Activated naive CD4-positive, alpha-beta T cell treated with anti-CD3 and anti-CD28 coated beads for 36 hours (primary cell): ENCODE measurements at regions of chr2 and their contacts with region 1.

Region 1: GRCh38 chr2:161077367-161078210 is 82.6 kb upstream of the TANK start:
- DNase-seq: peak; percentile 91
- H3K4me3 Mint-ChIP-seq: peak overlapping the region; percentile 34
- H3K27ac Mint-ChIP-seq: peak overlapping the region; percentile 92
- H3K4me1 Mint-ChIP-seq: peaks cover 41% of the 10 kb centered on the region
- H3K27me3 Mint-ChIP-seq: no peaks in the 10 kb centered on the region

Region 2: DNA sequence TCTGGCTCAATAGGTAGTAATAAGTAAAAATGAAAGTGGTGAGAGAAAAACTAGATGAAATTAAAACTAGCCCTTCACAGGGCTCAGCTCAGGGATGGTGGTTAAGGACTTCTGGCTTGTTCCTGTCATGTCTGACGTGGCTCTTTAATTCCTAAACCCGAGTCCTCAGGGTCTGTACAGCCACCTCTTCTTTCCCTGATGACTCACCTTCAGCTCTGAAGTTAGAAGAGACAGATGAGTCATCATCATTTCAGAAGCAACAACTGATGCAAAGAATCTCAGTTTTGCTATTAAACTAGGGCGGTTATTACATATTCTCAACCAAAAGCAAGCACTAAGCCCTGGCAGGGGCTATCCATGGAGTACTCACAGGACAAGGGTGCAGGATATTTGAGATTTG is 853.5 kb before region 1 on chr2:
- CTCF ChIA-PET with region 1: no interaction called
- intact Hi-C with region 1: loop called (anchors 1 kb)
- DNase-seq: peak; percentile 58
- H3K4me3 Mint-ChIP-seq: no peak overlapping the region
- H3K27ac Mint-ChIP-seq: peak overlapping the region; percentile 50
- H3K4me1 Mint-ChIP-seq: peaks cover 52% of the 10 kb centered on the region
- H3K27me3 Mint-ChIP-seq: peaks cover 17% of the 10 kb centered on the region

Region 3: DNA sequence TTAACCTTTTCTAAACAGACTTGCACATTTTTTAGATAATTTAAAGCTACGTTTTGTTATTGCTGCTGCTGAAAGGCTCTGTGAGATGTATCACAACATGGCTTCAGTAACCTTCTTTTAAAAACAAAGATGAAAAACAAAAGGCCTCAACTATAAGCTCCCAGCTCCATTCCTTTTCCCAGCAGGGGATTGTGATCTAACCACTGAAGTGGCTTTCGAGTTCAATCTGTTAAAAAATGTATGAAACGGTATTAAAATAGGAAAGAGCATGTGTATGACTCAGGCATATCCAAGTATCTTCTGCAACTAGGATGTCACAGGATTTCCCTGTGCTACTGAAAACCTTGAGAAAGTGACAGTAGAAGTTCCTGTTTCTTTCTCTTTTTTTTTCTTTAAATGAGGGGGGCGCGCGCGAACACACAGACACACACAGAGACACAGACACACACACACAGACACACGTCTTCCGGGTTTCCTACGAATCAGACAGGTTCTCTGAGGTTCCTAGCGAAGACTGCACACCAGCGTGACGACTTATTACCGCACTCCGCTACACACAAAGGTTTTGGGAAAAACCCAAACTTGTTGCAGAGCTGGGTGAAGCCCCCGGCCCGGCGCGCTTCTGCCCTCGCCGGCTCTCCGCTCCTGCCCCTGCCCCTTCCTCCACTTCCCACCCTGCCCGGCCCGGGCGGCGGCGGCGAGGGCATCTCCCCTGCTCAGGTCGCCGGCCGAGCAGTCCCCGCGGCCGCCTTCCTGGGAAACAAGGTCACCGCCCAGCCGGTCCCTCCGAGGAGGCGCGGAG is 670.8 kb before region 1 on chr2:
- CTCF ChIA-PET with region 1: no interaction called
- intact Hi-C with region 1: loop called (anchors 2 kb)
- DNase-seq: peak; percentile 85
- H3K4me3 Mint-ChIP-seq: peak overlapping the region; percentile 81
- H3K27ac Mint-ChIP-seq: peak overlapping the region; percentile 94
- H3K4me1 Mint-ChIP-seq: peaks cover 75% of the 10 kb centered on the region
- H3K27me3 Mint-ChIP-seq: no peaks in the 10 kb centered on the region

Region 4: DNA sequence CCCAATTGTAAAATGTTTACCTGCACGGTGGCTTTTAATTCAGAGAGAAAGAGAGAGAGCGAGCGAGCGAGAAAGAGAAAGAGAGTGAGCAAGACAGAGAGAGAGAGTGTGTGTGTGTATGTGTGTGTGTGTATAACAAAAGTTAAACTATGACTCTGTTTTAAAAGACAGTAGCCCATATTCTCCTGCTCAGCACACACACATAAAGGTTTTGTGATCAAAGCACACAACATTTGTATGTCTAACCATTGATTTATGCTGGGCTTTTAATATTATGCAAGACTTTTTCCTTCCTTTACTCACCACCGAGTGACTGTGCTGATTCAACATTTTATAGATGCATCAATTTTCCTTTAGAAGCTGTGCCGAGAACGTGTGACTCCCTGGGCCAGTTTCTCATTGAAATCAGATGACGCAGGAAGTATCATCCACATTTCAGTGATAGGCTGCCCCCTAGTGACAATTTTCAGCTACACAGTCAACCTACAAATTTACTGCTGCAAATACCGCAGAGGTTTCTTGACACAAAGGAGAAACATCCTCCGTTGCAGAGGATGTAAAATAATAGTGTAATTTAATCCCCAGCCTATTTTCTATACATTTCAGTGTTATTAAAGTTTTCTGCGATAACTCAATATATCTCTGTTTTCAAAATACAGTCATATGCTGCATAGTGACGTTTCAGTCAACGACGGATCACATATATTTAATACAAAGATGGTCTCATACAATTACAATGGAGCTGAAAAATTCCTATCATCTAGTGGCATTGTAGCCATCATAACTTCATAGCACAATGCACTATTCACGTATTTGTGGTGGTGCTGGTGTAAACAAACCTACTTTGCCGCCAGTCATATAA is 83.2 kb before region 1 on chr2:
- CTCF ChIA-PET with region 1: no interaction called
- intact Hi-C with region 1: no loop called
- DNase-seq: peak; percentile 89
- H3K4me3 Mint-ChIP-seq: no peak overlapping the region
- H3K27ac Mint-ChIP-seq: no peak overlapping the region
- H3K4me1 Mint-ChIP-seq: peaks cover 7% of the 10 kb centered on the region
- H3K27me3 Mint-ChIP-seq: no peaks in the 10 kb centered on the region

Region 5: DNA sequence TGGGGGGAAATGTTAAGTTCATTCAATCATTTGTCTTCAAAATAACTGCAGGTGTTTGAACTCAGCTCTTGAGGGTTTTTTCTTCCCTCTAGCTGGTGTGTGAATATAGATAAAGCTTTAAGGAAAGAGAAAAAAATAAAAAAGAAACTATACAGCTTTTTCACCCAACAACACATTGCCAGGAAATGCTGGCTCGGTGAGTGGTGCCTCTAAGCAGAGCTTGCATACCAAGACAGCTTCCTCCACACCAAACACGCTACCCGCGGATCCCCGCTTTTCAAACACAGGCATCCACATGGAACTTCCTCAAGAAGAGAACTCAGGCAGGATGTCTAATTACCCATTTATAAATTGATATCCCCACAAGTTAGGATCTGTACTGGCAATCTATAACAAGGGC is 12.8 kb after region 1 on chr2:
- CTCF ChIA-PET with region 1: interaction called, 3 read pairs
- intact Hi-C with region 1: loop called (anchors 1 kb)
- DNase-seq: peak; percentile 74
- H3K4me3 Mint-ChIP-seq: no peak overlapping the region
- H3K27ac Mint-ChIP-seq: peak overlapping the region; percentile 68
- H3K4me1 Mint-ChIP-seq: peaks cover 33% of the 10 kb centered on the region
- H3K27me3 Mint-ChIP-seq: no peaks in the 10 kb centered on the region

Region 6: GRCh38 chr2:161160226-161161069 is 82.9 kb after region 1 on chr2 and contains the start of gene TANK:
- CTCF ChIA-PET with region 1: interaction called, 3 read pairs
- intact Hi-C with region 1: loop called (anchors 1 kb)
- DNase-seq: peak; percentile 94
- H3K4me3 Mint-ChIP-seq: peak within 1 kb of the TSS; percentile 96
- H3K27ac Mint-ChIP-seq: peak within 1 kb of the TSS; percentile 99
- H3K4me1 Mint-ChIP-seq: peaks cover 48% of the 10 kb centered on the region
- H3K27me3 Mint-ChIP-seq: no peaks in the 10 kb centered on the region
- total RNA-seq, gene TANK: 48.6 to 50.4 TPM

Region 7: GRCh38 chr2:161905389-161906046 is 827.9 kb after region 1 on chr2:
- CTCF ChIA-PET with region 1: no interaction called
- intact Hi-C with region 1: loop called (anchors 5 kb)
- DNase-seq: peak; percentile 50
- H3K4me3 Mint-ChIP-seq: no peak overlapping the region
- H3K27ac Mint-ChIP-seq: peak overlapping the region; percentile 57
- H3K4me1 Mint-ChIP-seq: peaks cover 6% of the 10 kb centered on the region
- H3K27me3 Mint-ChIP-seq: no peaks in the 10 kb centered on the region

Region 8: DNA sequence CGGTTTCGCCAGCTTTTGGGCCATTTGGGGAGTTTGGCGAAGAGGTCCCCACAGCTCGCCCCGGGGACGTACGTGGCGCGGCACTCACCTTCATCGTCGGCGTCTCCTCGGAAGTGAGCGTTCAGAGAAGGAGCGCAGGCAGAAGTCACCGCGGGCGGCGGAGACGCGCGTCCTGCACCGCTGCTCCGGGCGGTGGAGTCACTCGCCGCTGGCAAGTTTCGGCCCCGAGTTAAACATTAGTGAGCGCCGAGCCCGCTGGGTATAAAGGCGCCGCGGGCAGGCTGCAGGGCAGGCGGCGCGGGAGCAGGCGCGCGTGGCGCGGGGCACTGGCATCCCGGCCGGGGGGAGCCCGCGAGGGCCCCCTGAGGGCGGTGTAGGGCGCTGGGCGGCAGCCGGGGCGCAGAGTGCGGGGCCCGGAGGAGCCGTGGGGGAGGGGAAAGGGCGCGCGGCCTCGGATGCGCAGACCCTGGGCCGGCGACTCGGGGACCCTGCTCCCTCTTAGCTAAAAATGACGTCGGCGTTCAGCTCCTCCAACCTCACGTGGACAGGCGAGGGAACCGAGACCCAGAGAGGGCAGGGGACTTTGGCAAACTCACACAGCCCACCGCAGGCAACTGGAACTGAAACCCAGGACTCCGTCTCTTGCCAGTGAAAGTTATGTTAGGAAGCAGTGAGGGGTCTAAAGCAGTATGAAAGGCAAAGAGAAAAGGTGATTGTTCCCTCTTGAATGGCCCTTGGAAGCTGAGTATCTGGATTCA is 996.5 kb after region 1 on chr2 and contains the start of gene DPP4:
- CTCF ChIA-PET with region 1: no interaction called
- intact Hi-C with region 1: loop called (anchors 2 kb)
- DNase-seq: peak; percentile 60
- H3K4me3 Mint-ChIP-seq: peak within 1 kb of the TSS; percentile 94
- H3K27ac Mint-ChIP-seq: peak within 1 kb of the TSS; percentile 79
- H3K4me1 Mint-ChIP-seq: peaks cover 48% of the 10 kb centered on the region
- H3K27me3 Mint-ChIP-seq: no peaks in the 10 kb centered on the region
- total RNA-seq, gene DPP4: 11.9 to 12.9 TPM